ENCODE measurements at regions of chr11 and their contacts with region 1.

Region 1: DNA sequence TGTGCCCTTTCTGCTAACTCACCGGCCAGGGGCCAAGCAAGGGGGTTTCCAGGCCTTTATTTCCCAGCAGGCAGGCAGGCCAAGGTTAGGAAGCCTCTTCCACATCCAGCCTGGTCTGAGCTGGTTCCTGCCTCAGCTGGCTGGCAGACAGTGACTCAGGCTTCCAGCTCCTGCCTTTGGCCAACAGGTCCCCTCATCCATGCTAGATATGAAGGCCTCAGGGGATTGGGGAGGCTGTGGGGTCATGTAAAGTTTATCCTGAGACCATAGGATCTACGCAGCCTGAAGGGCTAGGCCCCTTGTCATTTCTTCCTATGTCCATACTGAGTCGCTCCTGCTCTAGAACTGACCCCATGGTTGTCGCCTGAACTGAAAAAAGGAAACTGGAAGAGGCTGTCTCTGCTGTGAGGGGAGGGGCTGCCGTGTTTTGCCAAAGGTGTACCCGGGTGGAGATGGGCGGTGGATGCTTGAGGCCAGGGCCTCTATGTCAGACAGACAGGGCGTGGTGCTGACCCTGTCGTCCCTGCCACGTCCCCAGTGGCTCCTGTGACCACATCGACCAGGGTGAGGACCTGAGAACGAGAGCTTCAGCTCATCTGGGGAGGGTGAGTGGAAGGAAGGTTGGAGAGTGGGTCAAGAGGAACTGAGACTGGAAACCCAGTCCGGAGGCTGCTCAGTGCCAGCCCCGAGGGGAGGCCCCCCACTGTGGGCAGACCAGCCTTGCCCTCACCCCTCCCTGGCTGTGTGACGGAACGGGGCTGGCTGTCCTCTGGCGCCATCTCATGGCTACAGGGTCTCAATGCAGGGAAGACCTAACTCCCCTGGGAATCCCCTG is 17.0 kb downstream of the P2RY6 start:
- DNase-seq: peak; percentile 88
- H3K4me3 ChIP-seq: no peak overlapping the region
- H3K27ac ChIP-seq: peak overlapping the region; percentile 70
- H3K4me1 ChIP-seq: peaks cover 11% of the 10 kb centered on the region
- H3K27me3 ChIP-seq: no peaks in the 10 kb centered on the region

Region 2: GRCh38 chr11:72831513-72832300 is 457.4 kb before region 1 on chr11:
- in situ Hi-C with region 1: loop called (anchors 25 kb)
- DNase-seq: peak; percentile 89
- H3K4me3 ChIP-seq: no peak overlapping the region
- H3K27ac ChIP-seq: no peak overlapping the region
- H3K4me1 ChIP-seq: no peaks in the 10 kb centered on the region
- H3K27me3 ChIP-seq: no peaks in the 10 kb centered on the region

Region 3: DNA sequence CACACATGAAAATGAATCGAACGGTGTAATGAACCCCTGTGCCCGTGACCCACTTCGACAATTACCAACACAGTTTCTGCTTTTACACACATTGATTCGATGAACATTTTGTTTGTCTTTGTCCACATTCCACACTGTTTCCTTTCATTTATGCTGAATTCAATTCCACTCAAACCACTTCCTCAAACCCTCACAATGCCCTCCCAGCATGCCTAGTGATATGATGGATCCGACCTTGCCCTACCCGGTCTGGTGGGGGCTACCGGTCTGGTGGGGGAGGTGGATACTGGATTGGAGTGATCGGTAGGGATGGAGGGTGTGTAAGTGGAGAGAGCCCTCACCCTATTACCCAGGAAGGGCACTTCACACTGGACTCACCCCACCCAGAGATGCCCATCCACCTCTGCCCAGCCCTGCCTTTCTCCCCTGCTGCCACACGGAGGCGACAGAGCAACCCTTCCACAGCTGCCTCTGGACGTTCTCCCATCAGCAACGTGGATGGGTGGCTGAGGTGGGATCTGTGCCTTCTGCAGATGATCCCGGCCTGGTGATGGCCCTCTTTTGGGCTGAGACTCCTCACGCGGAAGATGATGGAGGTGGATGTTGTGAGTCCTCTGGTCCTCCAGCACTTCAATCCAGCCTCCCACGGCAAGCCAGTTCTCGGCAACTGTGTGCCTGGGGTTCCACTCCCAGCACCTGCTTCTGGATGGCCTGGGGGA is 104.0 kb before region 1 on chr11:
- in situ Hi-C with region 1: loop called (anchors 10 kb)
- DNase-seq: peak; percentile 88
- H3K4me3 ChIP-seq: no peak overlapping the region
- H3K27ac ChIP-seq: peak overlapping the region; percentile 72
- H3K4me1 ChIP-seq: peaks cover 15% of the 10 kb centered on the region
- H3K27me3 ChIP-seq: no peaks in the 10 kb centered on the region